ENCODE measurements at regions of chr7 and their contacts with region 1.

Region 1: DNA sequence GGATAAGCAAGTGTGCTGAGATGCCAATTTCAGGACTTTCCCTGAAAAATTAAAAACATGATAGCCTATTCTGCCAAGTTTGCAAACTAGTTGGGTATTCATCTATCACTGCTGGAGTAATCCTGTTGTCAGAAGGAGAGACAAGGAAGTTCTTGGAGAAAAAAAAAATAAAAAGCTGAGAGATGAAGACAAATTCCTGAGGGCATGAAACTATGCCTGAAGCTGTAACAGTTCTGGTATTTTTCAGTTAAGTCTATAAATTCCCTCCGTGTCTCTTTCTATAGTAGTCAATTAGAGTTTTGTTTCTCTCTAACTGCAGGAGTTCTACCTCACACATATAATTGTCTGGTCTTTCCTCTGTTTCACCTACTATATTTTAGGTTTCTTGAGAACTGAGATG is 95.7 kb downstream of the DGKB start:
- DNase-seq: no peak
- CTCF ChIP-seq: no peak

Region 2: DNA sequence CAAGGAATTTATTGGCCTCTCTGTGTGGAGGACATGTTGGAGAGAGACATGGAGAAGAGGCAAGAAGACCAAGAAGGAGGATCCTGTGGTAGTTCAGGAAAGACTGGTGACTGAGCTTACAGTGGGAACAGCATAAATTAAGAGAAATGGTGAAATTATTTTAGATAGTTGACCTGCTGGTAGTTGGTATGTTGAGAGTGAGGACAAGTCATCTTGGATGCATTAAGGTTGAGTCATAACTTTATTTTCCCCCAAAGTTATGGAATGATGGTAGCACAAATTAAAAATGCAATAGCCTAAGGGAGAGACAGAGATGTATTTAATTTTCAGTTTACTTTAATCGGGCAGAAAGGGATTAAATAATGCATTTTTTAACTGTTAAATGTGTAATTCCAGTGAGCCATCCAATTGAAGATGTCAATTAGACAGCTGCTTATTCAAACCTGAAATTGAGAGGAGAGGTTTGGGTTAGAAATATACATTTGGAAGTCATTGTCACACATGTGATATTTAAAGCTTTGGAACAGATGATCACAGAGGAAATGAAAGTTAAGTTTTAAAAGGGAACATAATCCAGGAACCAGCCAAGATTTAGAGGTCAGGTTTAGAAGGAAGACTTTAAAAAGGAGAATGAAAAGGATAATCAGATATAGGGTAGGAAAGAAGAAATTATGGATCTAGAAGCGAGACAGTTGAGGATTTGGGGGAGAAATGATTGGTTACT is 15.0 kb after region 1 on chr7:
- CTCF ChIA-PET with region 1: interaction called, 10 read pairs
- POLR2A ChIA-PET with region 1: no interaction called
- DNase-seq: no peak
- CTCF ChIP-seq: no peak